HepG2 (cell line): ENCODE measurements at regions of chr6 and their contacts with region 1.

Region 1: GRCh38 chr6:117317261-117317660 is 51.9 kb downstream of the VGLL2 start:
- DNase-seq: peak; percentile 39
- ATAC-seq: peak; percentile 78
- H3K4me3 ChIP-seq: no peak overlapping the region
- H3K27ac ChIP-seq: no peak overlapping the region
- H3K4me1 ChIP-seq: no peaks in the 10 kb centered on the region
- H3K27me3 ChIP-seq: peaks cover 0 to 6% of the 10 kb centered on the region in 2 experiments; a peak in 1 of 5 replicates
- CTCF ChIP-seq: peak; percentile 59
- EP300 ChIP-seq: no peak
- POLR2A ChIP-seq: no peak
- RAD21 ChIP-seq: peak; percentile 15; the same call in 1 of the 2 replicates

Region 2: DNA sequence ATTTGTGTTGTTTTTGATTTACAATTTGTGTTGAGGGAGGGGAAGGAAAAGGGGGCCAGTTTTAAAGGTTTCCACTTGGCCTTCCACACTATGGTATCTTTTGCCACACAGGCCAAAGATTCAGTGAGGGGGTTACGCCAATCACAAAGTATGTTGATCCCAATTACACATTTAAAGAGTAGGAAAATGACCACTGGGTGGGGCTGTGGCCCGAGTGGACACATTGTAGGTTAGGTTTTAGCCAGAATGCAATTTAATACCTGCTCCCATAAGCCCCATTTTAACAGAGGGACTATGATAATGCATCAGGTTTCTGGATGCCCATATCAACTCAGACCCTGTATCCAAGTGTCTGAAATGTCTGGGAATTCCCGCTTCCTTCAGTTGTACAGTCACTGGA is 36.3 kb before region 1 on chr6:
- CTCF ChIA-PET with region 1: no interaction called
- POLR2A ChIA-PET with region 1: no interaction called
- in situ Hi-C with region 1: no loop called
- intact Hi-C with region 1: loop called (anchors 1 kb)
- DNase-seq: peak; percentile 13
- ATAC-seq: peak; percentile 88
- H3K4me3 ChIP-seq: no peak overlapping the region
- H3K27ac ChIP-seq: no peak overlapping the region
- H3K4me1 ChIP-seq: no peaks in the 10 kb centered on the region
- H3K27me3 ChIP-seq: no peaks in the 10 kb centered on the region
- CTCF ChIP-seq: peak; percentile 40
- EP300 ChIP-seq: no peak
- POLR2A ChIP-seq: no peak
- RAD21 ChIP-seq: no peak